Activated CD4-positive, alpha-beta memory T cell treated with anti-CD3 and anti-CD28 coated beads, Interleukin-2, amount 10 ng/mL, durations not matched to agents 7 days and 5 days (primary cell): ENCODE measurements at regions of chr17 and their contacts with region 1.

Region 1: GRCh38 chr17:1516388-1517161 is at the start of gene INPP5K:
- DNase-seq: peak; percentile 99
- H3K4me3 Mint-ChIP-seq: peak within 1 kb of the TSS; percentile 86
- H3K27ac Mint-ChIP-seq: peak within 1 kb of the TSS; percentile 85
- H3K4me1 Mint-ChIP-seq: peaks cover 35% of the 10 kb centered on the region
- H3K27me3 Mint-ChIP-seq: no peaks in the 10 kb centered on the region
- total RNA-seq, gene INPP5K: 52.4 to 58.1 TPM

Region 2: GRCh38 chr17:1399679-1400512 is 116.7 kb before region 1 on chr17 and contains the start of gene YWHAE:
- CTCF ChIA-PET with region 1: interaction called, 8 read pairs
- POLR2A ChIA-PET with region 1: interaction called, 28 read pairs
- DNase-seq: peak; percentile 97
- H3K4me3 Mint-ChIP-seq: peak within 1 kb of the TSS; percentile 94
- H3K27ac Mint-ChIP-seq: peak within 1 kb of the TSS; percentile 89
- H3K4me1 Mint-ChIP-seq: peaks cover 30% of the 10 kb centered on the region
- H3K27me3 Mint-ChIP-seq: no peaks in the 10 kb centered on the region
- total RNA-seq, gene YWHAE: 352 to 374 TPM

Region 3: DNA sequence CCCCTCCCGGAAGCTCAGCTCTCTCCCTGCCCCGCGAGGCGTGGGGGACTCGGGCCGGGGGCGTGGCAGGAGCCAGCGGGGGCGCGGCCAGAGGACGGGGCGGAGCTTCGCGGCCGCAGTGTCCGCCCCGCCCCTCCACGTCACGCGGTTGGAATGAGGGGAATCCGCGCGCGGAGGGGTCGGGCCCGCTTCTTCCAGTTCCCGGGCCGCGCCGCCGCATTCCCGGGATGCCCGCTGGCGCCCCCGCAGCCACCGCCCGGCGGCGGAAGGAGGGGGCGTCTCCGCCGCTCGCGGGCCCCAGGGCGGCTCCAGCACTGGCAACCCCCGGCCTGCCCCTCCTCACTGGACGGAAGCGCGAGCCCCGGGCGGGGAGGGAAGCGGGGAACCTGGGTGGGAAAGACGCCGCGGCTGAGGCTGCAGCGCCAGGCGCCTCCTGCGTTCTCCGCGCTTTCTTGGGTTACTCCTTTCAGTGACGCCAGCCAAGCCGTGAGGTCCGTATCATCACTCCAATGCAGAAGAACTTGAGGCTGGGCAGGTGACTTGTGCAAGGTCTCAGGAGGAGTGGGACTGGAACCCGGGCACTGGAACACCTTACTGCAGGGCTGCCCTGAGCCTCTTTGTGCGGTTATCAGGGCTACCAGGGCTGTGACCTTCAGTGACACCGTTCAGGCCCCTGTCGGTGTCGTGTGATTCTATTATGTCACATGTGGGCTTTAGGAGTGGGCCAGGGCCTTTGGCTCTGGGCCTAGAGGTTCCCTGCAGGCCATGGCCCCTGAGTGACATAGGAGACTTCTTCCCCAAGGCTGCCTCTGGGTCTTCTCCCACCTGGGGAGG is 28.3 kb before region 1 on chr17:
- CTCF ChIA-PET with region 1: no interaction called
- POLR2A ChIA-PET with region 1: interaction called, 34 read pairs
- DNase-seq: peak; percentile 79
- H3K4me3 Mint-ChIP-seq: peak overlapping the region; percentile 77
- H3K27ac Mint-ChIP-seq: peak overlapping the region; percentile 75
- H3K4me1 Mint-ChIP-seq: peaks cover 50% of the 10 kb centered on the region
- H3K27me3 Mint-ChIP-seq: peaks cover 2% of the 10 kb centered on the region

Region 4: GRCh38 chr17:1561400-1562175 is 45.0 kb after region 1 on chr17:
- CTCF ChIA-PET with region 1: interaction called, 7 read pairs
- POLR2A ChIA-PET with region 1: interaction called, 11 read pairs
- DNase-seq: peak; percentile 39
- H3K4me3 Mint-ChIP-seq: peak overlapping the region; percentile 78
- H3K27ac Mint-ChIP-seq: no peak overlapping the region
- H3K4me1 Mint-ChIP-seq: peaks cover 41% of the 10 kb centered on the region
- H3K27me3 Mint-ChIP-seq: peaks cover 5% of the 10 kb centered on the region